Right ventricle myocardium superior (tissue), 1 donor: ENCODE measurements at regions of chr10 and their contacts with region 1.

Region 1: GRCh38 chr10:35236739-35237138 is 99.6 kb upstream of the CCNY start:
- DNase-seq: no peak
- ATAC-seq: no peak

Region 2: DNA sequence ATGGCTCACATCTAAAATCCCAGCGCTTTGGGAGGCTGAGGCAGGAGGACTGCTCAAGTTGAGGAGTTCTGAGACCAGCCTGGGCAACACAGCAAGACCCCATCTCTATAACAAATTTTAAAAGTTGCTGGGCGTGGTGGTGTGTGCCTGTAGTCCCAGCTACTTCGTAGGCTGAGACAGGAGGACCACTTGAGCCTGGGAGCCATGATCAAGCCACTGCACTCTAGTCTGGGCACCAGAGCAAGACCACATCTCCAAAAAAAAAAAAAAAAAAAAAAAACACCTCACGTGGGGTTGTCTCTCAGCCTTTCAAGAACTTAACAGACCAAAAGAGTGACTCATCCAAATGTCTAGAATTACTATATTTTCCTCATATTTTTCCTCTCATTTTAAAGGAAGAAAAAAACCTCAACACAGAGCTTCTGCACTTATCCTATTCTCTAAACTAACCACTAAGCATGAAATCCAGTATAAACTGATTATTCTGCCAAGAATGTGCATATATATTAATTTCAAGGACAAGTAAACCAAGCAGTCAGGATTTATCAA is 192.9 kb before region 1 on chr10:
- intact Hi-C with region 1: no loop called
- DNase-seq: no peak
- ATAC-seq: no peak

Region 3: DNA sequence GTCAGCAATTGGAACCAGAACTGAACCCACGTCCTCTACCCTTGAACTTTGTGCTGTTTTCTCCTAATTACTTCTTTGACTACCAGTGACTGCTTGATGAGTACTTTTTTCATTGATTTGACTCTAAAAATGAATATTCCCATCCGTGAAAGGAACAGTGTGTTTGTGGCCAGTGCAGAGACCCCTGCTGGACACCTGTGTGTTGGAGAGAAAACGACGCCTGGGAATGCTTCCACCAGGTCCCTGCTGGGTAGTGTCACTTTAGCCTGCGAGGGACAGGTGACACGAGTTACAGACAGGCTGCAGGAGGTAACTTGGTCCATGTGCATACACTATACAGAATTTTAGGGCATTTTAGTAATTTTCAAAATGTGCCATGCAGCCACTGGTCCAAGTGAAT is 361.6 kb after region 1 on chr10:
- intact Hi-C with region 1: loop called (anchors 10 kb)
- DNase-seq: no peak
- ATAC-seq: peak; percentile 51